Sciatic nerve (tissue), 2 donors: ENCODE measurements at regions of chr19 and their contacts with region 1.

Region 1: DNA sequence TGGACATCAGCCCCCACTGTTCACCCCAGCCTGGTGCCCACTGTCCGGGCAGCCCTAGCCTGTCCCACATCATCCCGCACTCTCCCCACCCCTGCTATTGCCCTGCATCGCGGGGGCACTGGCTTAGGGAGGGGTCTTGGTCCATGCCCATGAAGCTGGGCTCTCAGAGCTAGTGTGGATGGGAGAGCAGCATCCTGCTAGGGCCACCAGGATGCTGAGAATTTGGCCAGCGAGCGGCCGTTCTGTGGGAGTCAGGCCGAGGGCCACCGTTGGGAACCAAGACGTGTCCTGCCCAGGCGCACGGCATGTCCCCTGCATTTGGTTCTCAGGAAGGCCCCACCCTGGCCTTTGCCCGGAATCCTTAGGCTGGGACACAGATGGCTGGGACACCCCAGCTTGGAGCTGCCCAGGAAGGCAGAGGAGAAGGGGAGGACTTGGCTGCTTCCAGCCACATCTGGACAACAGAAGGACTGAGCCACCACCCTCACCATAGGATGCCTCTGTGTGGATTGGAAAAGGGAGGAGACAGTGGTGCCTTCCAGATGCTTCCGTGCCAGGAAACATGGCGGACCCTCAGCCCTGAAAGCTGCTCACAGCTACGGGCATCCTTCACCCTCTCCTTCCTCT is 14.6 kb downstream of the ADGRE5 start:
- DNase-seq: no peak
- ATAC-seq: no peak

Region 2: GRCh38 chr19:14363183-14364097 is 32.4 kb before region 1 on chr19:
- intact Hi-C with region 1: no loop called
- DNase-seq: peak; percentile 70
- ATAC-seq: peak; percentile 75

Region 3: DNA sequence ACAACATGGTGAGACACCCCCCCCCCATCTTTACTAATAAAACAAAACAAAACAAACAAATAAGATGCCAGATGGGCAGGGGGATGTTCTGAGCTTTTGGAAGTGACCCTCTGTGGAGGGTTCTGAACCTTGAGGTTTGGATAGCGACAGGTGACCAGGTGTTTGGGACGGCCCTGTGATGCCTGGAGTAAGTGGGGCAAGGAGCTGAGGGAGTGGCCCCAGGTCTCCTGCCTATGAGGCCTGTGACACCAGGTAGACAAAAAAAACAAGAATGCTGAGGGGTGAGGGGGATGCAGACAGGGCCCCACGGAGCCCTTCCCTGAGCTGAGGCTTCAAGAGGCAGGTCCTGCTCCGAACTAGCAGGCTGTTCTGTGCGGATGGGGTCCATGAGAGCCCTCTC is 373.4 kb after region 1 on chr19:
- intact Hi-C with region 1: loop called (anchors 5 kb)
- DNase-seq: no peak
- ATAC-seq: no peak